Thyroid gland (tissue), 4 donors: ENCODE measurements at regions of chr9 and their contacts with region 1.

Region 1: GRCh38 chr9:37903647-37904444 is at the start of gene SLC25A51:
- DNase-seq: peak; percentile 90 to 94
- H3K4me3 ChIP-seq: peak within 1 kb of the TSS; percentile 91 to 96 (median 94)
- H3K27ac ChIP-seq: peak within 1 kb of the TSS; percentile 74 to 94 (median 84)
- H3K4me1 ChIP-seq: peaks cover 17 to 19% of the 10 kb centered on the region in 2 donors
- H3K27me3 ChIP-seq: no peaks in the 10 kb centered on the region
- CTCF ChIP-seq: peak; percentile 55 to 98 (median 90)
- POLR2A ChIP-seq: peak in 1 of 2 donors; percentile 71
- total RNA-seq, gene SLC25A51: 28.9 to 34.6 (median 31.6) TPM

Region 2: GRCh38 chr9:37480759-37481158 is 423.1 kb before region 1 on chr9:
- intact Hi-C with region 1: loop called (anchors 5 kb)
- DNase-seq: no peak
- H3K4me3 ChIP-seq: no peak overlapping the region
- H3K27ac ChIP-seq: no peak overlapping the region
- H3K4me1 ChIP-seq: peaks cover 4 to 6% of the 10 kb centered on the region in 2 donors
- H3K27me3 ChIP-seq: no peaks in the 10 kb centered on the region
- CTCF ChIP-seq: no peak
- POLR2A ChIP-seq: no peak

Region 3: DNA sequence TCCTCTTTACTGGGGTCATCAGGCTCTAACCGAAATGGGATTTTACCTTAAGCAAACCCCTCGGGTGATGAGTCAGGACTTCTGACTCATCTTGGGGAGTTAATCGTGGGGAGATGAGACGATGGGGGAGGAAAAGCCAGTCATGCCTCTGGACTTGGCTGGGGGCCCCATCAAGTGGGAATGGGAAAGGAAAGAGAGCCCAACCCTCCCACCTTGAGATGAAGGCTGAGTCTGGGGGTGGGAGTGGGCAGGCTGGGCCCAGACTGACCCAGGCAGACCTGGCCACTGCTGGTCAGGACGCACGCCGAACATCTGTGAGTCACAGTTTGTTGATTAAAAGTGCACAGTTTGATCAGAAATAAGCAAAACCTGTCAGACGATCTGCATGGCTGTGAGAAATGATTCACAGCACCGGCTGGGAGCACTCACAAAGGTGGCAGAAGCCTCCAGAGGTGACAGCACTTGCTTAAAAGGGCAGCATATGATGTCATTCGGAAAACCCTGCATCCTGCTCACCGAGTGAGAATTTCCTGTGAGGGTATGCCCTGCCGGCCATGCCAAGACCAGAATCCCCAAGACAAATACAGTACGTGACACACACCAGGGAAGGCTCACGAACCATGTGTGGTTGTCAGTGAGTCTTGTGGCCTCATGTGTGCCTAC is 50.1 kb after region 1 on chr9:
- intact Hi-C with region 1: no loop called
- DNase-seq: no peak
- H3K4me3 ChIP-seq: no peak overlapping the region
- H3K27ac ChIP-seq: no peak overlapping the region
- H3K4me1 ChIP-seq: peaks cover 0 to 6% of the 10 kb centered on the region in 2 donors
- H3K27me3 ChIP-seq: no peaks in the 10 kb centered on the region
- CTCF ChIP-seq: no peak
- POLR2A ChIP-seq: no peak